Activated CD4-positive, alpha-beta T cell treated with anti-CD3 and anti-CD28 coated beads, Interleukin-2, amount 10 ng/mL, durations not matched to agents 24 days and 14 days (primary cell): ENCODE measurements at regions of chr10 and their contacts with region 1.

Region 1: GRCh38 chr10:14959276-14960057 is at the start of gene MEIG1:
- DNase-seq: peak; percentile 98
- H3K4me3 Mint-ChIP-seq: peak within 1 kb of the TSS; percentile 93
- H3K27ac Mint-ChIP-seq: peak within 1 kb of the TSS; percentile 96
- H3K4me1 Mint-ChIP-seq: peaks cover 17% of the 10 kb centered on the region
- H3K27me3 Mint-ChIP-seq: no peaks in the 10 kb centered on the region
- total RNA-seq, gene MEIG1: not detected in 2 replicates

Region 2: DNA sequence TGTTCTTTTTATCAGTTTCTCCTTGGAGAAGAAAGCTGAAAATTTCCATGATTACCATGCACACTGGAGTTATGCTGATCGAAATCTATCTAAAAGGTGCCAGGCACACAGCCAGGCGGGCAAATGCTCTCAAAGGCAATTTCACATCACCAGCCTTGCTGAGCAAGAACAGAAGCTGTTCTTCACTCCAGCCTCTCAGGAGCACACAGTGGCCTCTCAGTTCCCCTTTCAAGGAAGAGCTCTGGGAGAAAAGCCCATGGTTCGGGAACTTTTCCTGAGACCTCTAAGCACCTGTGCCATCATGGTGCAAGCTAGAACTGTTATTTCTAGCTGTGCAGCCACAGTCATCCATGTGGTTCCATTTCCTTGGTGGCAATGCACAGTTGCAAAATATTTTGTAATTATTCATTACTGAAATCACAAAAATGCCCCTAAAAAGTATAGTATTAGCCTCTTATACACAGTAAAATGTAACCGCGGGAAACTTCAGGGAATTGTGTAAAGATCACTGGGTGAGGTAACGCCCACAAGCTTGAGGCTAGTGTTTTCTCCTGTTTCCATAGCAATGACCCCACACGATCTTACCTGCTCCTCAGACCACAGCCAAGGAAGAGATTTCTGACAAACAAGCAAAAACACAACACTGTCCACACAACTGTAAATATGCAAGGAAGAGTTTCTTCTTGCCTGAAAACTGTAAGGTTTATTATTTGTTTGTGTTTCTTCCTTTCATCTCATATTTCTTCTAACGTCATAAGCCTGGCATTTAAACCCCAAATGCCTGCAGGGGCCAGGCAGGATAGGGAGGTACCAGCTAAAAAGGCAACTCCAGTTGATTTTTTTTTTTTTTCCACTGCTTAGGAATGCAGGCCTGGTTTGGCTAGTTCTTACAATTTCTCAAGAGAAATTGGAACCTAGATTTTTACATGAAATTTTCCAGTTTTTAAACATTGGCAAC is 305.9 kb before region 1 on chr10:
- intact Hi-C with region 1: loop called (anchors 10 kb)
- DNase-seq: peak; percentile 75
- H3K4me3 Mint-ChIP-seq: peak overlapping the region; percentile 51
- H3K27ac Mint-ChIP-seq: peak overlapping the region; percentile 74
- H3K4me1 Mint-ChIP-seq: peaks cover 65% of the 10 kb centered on the region
- H3K27me3 Mint-ChIP-seq: no peaks in the 10 kb centered on the region

Region 3: GRCh38 chr10:14698111-14698828 is 261.2 kb before region 1 on chr10:
- intact Hi-C with region 1: no loop called
- DNase-seq: no peak
- H3K4me3 Mint-ChIP-seq: no peak overlapping the region
- H3K27ac Mint-ChIP-seq: no peak overlapping the region
- H3K4me1 Mint-ChIP-seq: no peaks in the 10 kb centered on the region
- H3K27me3 Mint-ChIP-seq: no peaks in the 10 kb centered on the region